AG04449 (cell line): ENCODE measurements at regions of chr1 and their contacts with region 1.

Region 1: DNA sequence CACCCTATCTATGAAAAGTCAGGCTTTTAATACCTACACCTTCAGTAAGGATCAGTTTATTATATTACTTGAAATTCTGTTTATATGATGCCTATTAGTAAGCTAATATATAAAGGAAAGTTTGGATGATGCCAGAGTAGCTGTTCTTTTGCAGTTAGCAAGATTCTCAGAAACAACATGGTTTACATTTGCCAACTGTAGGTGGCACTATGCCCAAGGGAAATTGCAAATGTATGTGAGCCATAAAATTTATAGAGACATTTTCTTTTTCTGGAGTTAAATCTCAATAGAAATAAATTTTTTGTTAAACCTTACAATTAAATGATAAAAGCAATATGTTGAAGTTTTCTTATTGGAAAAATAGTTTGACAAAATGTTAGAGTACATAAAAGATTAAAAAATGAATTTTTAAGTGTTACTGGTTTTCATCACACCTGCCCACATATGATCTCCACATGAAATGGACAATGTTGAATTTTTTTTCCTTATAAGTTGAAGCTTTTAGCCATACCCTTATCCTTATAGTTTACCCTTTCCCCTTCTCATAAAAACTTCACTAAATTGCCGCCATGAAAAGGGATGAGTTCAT is 32.1 kb upstream of the EPHX4 start:
- DNase-seq: peak; percentile 5
- H3K4me3 ChIP-seq: no peak overlapping the region
- CTCF ChIP-seq: peak; percentile 45

Region 2: DNA sequence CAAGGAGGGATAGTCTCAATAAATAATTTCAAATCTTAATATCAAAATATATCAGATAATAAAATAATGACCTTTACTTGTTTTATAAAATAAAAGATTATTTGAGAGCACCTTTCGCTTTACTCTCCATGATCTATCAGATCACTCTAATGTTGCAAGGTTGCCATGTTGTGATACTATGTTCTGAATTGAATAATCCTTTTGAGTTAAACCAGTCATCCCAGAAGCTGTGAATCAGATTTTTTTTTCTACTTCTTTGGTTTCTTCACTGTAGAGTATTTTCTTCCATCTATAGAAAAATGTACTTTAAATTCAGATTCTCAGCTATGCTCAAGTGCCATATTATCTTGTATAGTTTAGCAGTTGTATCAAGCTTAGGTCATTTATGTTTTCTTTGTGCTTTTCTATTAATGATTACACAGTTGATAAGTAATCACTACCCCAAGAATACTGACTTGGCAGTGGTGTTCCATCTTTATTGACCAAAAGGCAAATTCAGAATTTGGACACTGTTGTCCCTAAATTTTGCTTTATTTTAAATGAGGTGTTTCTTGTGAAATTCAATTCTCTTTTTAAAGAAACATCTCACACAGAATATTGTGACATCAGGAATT is 15.6 kb before region 1 on chr1:
- CTCF ChIA-PET with region 1: interaction called, 13 read pairs
- POLR2A ChIA-PET with region 1: no interaction called
- DNase-seq: no peak
- H3K4me3 ChIP-seq: no peak overlapping the region
- CTCF ChIP-seq: no peak

Region 3: DNA sequence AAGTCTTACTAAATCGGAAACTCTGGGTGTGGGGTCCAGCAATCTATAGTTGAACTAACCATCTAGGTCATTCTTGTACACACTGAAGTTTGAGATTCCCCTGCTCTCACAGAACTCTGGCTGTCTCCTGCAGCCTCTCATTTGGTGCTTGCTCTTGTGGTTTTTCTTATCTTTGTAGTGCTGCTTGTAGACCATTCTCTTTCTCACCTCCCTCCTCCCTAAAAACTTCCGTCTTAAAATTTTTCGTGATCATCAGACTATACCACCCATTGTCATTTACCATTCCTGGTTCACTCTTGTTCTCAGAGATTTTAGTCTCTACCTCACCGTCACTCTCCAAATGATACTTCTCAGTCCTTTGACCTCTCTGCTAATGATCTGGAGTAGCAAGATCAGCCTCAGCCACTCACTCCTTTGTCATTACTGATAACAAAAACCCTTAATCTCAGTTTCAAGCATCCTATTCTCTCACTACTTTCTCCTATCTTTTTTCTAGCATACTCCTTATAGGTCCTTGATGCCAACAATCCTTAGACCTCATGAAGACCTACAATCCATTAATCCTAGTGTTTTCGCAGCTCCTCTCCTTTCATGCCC is 19.1 kb after region 1 on chr1:
- CTCF ChIA-PET with region 1: interaction called, 21 read pairs
- POLR2A ChIA-PET with region 1: no interaction called
- DNase-seq: no peak
- H3K4me3 ChIP-seq: no peak overlapping the region
- CTCF ChIP-seq: no peak

Region 4: GRCh38 chr1:92291372-92291999 is 293.8 kb after region 1 on chr1:
- CTCF ChIA-PET with region 1: interaction called, 163 read pairs
- POLR2A ChIA-PET with region 1: no interaction called
- DNase-seq: peak; percentile 17
- H3K4me3 ChIP-seq: no peak overlapping the region
- CTCF ChIP-seq: peak; percentile 64

Region 5: GRCh38 chr1:92298573-92299476 is 301.1 kb after region 1 on chr1 and contains the starts of genes GLMN and RPAP2:
- CTCF ChIA-PET with region 1: interaction called, 17 read pairs
- POLR2A ChIA-PET with region 1: no interaction called
- DNase-seq: peak; percentile 14
- H3K4me3 ChIP-seq: peak within 1 kb of the TSS; percentile 79
- CTCF ChIP-seq: peak; percentile 20